CD4-positive, alpha-beta T cell (primary cell): ENCODE measurements at regions of chr7 and their contacts with region 1.

Region 1: GRCh38 chr7:5704534-5704922 is 76.9 kb downstream of the RNF216 start:
- DNase-seq: peak; percentile 60 to 89 (median 72)
- ATAC-seq: no peak
- H3K4me3 ChIP-seq: no peak overlapping the region
- H3K4me3 Mint-ChIP-seq: no peak overlapping the region
- H3K27ac ChIP-seq: no peak overlapping the region
- H3K27ac Mint-ChIP-seq: peak overlapping the region; percentile 24
- H3K4me1 ChIP-seq: peaks cover 31% of the 10 kb centered on the region
- H3K4me1 Mint-ChIP-seq: peaks cover 42% of the 10 kb centered on the region
- H3K27me3 ChIP-seq: no peaks in the 10 kb centered on the region
- H3K27me3 Mint-ChIP-seq: no peaks in the 10 kb centered on the region
- CTCF ChIP-seq: peak; percentile 88

Region 2: GRCh38 chr7:4434306-4434705 is 1270.2 kb before region 1 on chr7:
- CTCF ChIA-PET with region 1: no interaction called
- POLR2A ChIA-PET with region 1: no interaction called
- intact Hi-C with region 1: no loop called
- DNase-seq: no peak
- ATAC-seq: no peak
- H3K4me3 ChIP-seq: no peak overlapping the region
- H3K4me3 Mint-ChIP-seq: no peak overlapping the region
- H3K27ac ChIP-seq: no peak overlapping the region
- H3K27ac Mint-ChIP-seq: no peak overlapping the region
- H3K4me1 ChIP-seq: no peaks in the 10 kb centered on the region
- H3K4me1 Mint-ChIP-seq: no peaks in the 10 kb centered on the region
- H3K27me3 ChIP-seq: no peaks in the 10 kb centered on the region
- H3K27me3 Mint-ChIP-seq: peaks cover 38% of the 10 kb centered on the region
- CTCF ChIP-seq: no peak

Region 3: GRCh38 chr7:4809091-4809591 is 895.4 kb before region 1 on chr7:
- CTCF ChIA-PET with region 1: no interaction called
- POLR2A ChIA-PET with region 1: no interaction called
- intact Hi-C with region 1: no loop called
- DNase-seq: peak in 6 of 14 experiments; percentile 20 to 68 (median 36)
- ATAC-seq: peak; percentile 55
- H3K4me3 ChIP-seq: peak overlapping the region; percentile 41
- H3K4me3 Mint-ChIP-seq: peak overlapping the region; percentile 70
- H3K27ac ChIP-seq: no peak overlapping the region
- H3K27ac Mint-ChIP-seq: no peak overlapping the region
- H3K4me1 ChIP-seq: peaks cover 19% of the 10 kb centered on the region
- H3K4me1 Mint-ChIP-seq: peaks cover 4% of the 10 kb centered on the region
- H3K27me3 ChIP-seq: peaks cover 16 to 27% of the 10 kb centered on the region in 2 experiments
- H3K27me3 Mint-ChIP-seq: peaks cover 31% of the 10 kb centered on the region
- CTCF ChIP-seq: no peak

Region 4: DNA sequence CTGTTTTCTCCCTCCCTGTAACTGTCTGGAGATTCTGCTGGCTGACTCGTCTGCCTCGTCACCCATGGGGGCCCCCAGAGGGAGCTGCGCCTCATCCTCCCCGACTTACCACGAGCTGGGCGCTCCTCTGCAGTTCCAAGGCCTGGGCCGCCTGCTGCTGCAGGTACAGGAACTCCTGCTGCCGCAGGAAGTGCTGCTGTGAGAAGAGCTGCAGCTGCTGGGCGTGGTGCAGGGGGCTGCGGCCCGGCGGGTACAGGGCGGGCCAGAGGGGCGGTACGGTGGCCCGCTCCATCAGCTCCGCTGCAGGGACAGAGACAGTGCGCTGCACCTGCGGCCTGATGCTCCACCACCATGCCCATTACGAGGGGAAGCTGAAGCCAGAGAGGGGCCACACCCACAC is 328.6 kb before region 1 on chr7:
- CTCF ChIA-PET with region 1: no interaction called
- POLR2A ChIA-PET with region 1: no interaction called
- intact Hi-C with region 1: no loop called
- DNase-seq: peak in 9 of 14 experiments; percentile 3 to 53 (median 32)
- ATAC-seq: peak; percentile 82
- H3K4me3 ChIP-seq: no peak overlapping the region
- H3K4me3 Mint-ChIP-seq: no peak overlapping the region
- H3K27ac ChIP-seq: no peak overlapping the region
- H3K27ac Mint-ChIP-seq: no peak overlapping the region
- H3K4me1 ChIP-seq: peaks cover 18% of the 10 kb centered on the region
- H3K4me1 Mint-ChIP-seq: peaks cover 5% of the 10 kb centered on the region
- H3K27me3 ChIP-seq: no peaks in the 10 kb centered on the region
- H3K27me3 Mint-ChIP-seq: no peaks in the 10 kb centered on the region
- CTCF ChIP-seq: no peak

Region 5: DNA sequence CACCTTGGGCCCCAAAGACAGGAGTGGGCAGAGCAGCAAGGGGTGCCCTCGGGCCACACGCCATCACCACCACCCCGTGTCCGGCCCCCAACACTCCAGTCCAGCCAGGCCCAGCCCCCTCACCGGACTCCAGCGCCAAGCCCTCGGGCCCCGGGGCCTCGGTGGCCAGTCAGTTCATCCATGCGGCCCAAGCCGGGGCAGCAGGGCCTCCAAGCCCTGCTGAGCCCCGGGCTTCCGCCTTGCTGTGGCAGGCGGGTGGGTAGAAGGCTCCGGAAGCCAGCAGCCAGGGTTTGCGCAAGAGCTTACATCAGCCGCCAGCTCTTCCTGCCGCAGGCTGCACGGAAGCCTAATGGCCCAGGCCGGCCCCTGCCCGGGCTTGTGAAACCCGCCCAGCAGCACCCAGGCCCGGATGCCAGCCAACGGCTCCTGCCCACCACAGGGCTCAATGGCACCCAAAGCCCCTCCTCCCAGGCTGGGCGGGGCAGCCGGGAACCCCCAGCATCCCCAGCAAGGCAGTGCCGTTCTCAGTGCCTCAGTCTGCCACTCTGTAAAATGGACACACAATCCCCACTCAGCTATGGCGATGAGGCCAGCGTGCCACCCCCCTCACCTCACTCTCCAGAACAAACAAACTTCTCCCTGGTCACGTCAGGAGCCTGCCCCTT is 307.4 kb before region 1 on chr7:
- CTCF ChIA-PET with region 1: interaction called, 6 read pairs
- POLR2A ChIA-PET with region 1: interaction called, 3 read pairs
- intact Hi-C with region 1: loop called (anchors 10 kb)
- DNase-seq: peak; percentile 77 to 99 (median 87)
- ATAC-seq: peak; percentile 89
- H3K4me3 ChIP-seq: peak overlapping the region; percentile 93
- H3K4me3 Mint-ChIP-seq: peak overlapping the region; percentile 91
- H3K27ac ChIP-seq: peak overlapping the region; percentile 77 to 91
- H3K27ac Mint-ChIP-seq: peak overlapping the region; percentile 91
- H3K4me1 ChIP-seq: peaks cover 48% of the 10 kb centered on the region
- H3K4me1 Mint-ChIP-seq: peaks cover 25% of the 10 kb centered on the region
- H3K27me3 ChIP-seq: no peaks in the 10 kb centered on the region
- H3K27me3 Mint-ChIP-seq: no peaks in the 10 kb centered on the region
- CTCF ChIP-seq: no peak

Region 6: DNA sequence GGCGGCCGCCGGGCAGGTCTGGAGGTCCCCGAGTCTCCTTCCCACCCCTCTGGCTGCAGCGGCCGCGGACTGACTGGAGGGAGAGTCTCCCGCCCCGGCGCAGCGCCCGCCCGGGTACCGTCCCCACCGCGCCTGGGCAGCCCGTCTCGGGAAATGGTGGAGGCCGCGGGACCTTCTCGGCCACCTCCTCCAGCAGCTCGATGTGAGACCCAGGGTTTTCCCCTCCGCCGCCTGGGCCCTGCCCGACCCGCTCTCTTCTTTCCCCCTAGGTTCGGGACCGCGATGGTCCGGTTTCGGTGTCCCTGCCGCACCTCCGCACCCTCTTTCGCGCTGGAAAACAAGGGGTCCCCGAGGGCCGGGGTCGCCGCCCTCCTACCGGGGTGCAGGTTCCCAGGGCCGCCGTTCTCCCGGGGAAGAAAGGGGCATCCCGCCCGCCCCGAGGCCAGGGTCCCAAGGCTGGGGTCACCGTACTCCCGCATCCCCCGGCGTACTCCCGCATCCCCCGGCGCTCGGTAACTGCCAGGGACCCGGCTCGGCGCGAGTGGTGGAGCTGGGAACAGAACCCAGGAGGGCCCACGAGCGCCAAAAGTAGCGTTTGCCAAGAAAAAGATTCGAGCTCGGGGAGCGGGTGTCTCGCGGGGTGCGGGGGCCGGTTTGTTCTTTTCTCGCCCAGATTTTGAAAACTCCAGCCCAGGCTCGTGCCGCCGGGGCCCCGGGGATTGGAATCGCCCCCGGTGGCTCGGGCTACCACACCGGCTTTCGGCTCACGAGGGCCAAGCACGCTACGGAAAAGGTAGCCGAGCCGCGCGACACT is 284.3 kb before region 1 on chr7:
- CTCF ChIA-PET with region 1: no interaction called
- POLR2A ChIA-PET with region 1: no interaction called
- intact Hi-C with region 1: no loop called
- DNase-seq: peak in 3 of 14 experiments; percentile 27 to 51 (median 50)
- ATAC-seq: no peak
- H3K4me3 ChIP-seq: peak overlapping the region; percentile 35
- H3K4me3 Mint-ChIP-seq: peak overlapping the region; percentile 74
- H3K27ac ChIP-seq: no peak overlapping the region
- H3K27ac Mint-ChIP-seq: no peak overlapping the region
- H3K4me1 ChIP-seq: peaks cover 70% of the 10 kb centered on the region
- H3K4me1 Mint-ChIP-seq: peaks cover 48% of the 10 kb centered on the region
- H3K27me3 ChIP-seq: peaks cover 73 to 77% of the 10 kb centered on the region in 2 experiments
- H3K27me3 Mint-ChIP-seq: peaks cover 68% of the 10 kb centered on the region
- CTCF ChIP-seq: no peak

Region 7: DNA sequence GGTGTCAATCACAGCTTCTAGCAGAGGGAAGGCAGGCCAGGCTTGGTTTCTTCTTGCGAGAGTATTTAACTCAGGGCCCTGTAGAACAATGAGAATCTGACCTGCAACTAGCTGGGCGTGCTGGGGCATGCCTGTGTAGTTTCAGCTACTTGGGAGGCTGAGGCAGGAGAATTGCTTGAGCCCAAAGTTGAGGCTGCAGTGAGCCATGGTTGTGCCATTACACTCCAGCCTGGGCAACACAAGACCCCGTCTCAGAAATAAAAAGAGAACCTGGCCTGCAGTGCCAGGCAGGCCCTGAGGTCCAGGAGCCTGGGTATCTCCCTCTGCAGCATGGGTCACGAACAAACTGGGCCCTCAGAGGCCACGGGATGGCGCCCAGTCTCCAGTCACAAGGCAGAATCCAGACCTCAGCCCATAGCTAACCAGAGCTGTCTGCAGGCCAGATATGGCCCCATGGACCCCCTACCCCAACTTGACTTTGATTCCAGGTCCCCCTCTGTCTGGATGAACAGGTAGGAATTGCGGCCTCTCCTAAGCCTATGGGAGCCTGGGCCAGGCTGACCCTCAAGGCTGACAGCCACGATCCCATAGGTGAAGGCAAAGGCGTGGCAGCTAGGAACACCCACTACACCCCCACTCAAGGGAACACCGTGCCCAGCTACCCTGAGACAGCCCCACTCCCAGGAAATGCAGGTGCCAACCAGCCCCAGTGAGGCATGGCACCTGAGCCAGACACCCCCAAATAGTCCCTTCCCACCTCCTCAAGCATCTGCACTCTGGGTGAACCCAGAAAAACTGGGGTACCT is 178.2 kb before region 1 on chr7:
- CTCF ChIA-PET with region 1: no interaction called
- POLR2A ChIA-PET with region 1: interaction called, 14 read pairs
- intact Hi-C with region 1: no loop called
- DNase-seq: peak in 10 of 14 experiments; percentile 10 to 56 (median 26)
- ATAC-seq: no peak
- H3K4me3 ChIP-seq: peak overlapping the region; percentile 72
- H3K4me3 Mint-ChIP-seq: peak overlapping the region; percentile 97
- H3K27ac ChIP-seq: peak overlapping the region; percentile 27 to 48
- H3K27ac Mint-ChIP-seq: peak overlapping the region; percentile 95
- H3K4me1 ChIP-seq: peaks cover 37% of the 10 kb centered on the region
- H3K4me1 Mint-ChIP-seq: peaks cover 41% of the 10 kb centered on the region
- H3K27me3 ChIP-seq: no peaks in the 10 kb centered on the region
- H3K27me3 Mint-ChIP-seq: peaks cover 4% of the 10 kb centered on the region
- CTCF ChIP-seq: no peak

Region 8: DNA sequence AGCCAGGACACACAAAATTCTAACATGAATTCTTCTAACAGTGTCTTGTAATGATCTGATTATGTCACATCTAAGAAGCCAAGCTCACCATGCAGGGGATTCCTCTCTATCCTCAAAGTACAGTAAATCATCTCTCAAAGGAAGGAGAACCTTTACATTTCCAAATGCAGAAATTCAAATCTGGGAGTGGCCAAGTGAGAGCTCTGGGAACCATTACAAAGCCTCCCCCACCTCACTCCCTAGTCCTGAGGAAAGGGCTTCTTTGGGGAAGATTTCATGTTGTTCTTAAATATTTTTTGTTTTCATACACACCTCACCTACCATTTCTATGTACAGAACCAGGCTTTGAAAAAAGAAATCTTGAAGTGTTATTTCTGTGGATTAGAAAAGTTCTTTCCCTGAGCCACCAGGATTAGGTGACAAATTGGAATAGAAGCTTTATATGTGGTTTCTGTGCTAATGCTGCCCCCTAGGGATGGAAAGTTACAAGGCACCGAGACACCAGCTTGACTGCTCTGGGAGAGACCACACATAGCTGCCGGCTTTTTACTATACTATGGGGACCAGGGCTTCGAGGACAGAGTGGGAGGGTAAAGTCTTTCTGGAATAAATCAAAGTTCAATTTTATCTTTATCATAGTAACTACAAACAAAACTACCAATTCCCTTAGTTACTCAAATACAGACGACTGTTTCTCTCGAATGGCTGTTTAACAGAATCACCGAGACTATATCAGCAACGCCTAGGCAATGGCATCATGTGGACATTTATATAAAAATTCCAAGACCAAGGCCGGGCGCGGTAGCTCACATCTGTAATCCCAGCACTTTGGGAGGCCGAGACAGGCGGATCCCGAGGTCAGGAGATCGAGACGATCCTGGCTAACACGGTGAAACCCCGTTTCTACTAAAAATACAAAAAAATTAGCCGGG is 39.2 kb before region 1 on chr7:
- CTCF ChIA-PET with region 1: interaction called, 17 read pairs
- POLR2A ChIA-PET with region 1: no interaction called
- intact Hi-C with region 1: loop called (anchors 1 kb)
- DNase-seq: peak; percentile 38 to 86 (median 50)
- ATAC-seq: peak; percentile 80
- H3K4me3 ChIP-seq: no peak overlapping the region
- H3K4me3 Mint-ChIP-seq: no peak overlapping the region
- H3K27ac ChIP-seq: no peak overlapping the region
- H3K27ac Mint-ChIP-seq: no peak overlapping the region
- H3K4me1 ChIP-seq: peaks cover 15% of the 10 kb centered on the region
- H3K4me1 Mint-ChIP-seq: peaks cover 21% of the 10 kb centered on the region
- H3K27me3 ChIP-seq: no peaks in the 10 kb centered on the region
- H3K27me3 Mint-ChIP-seq: no peaks in the 10 kb centered on the region
- CTCF ChIP-seq: peak; percentile 82

Region 9: GRCh38 chr7:5689118-5689517 is 15.4 kb before region 1 on chr7:
- CTCF ChIA-PET with region 1: interaction called, 10 read pairs
- POLR2A ChIA-PET with region 1: interaction called, 13 read pairs
- intact Hi-C with region 1: loop called in 1 of 2 experiments (anchors 1 kb)
- DNase-seq: peak; percentile 33 to 84 (median 58)
- ATAC-seq: peak; percentile 61
- H3K4me3 ChIP-seq: peak overlapping the region; percentile 21
- H3K4me3 Mint-ChIP-seq: peak overlapping the region; percentile 75
- H3K27ac ChIP-seq: peak overlapping the region; percentile 69 to 83
- H3K27ac Mint-ChIP-seq: peak overlapping the region; percentile 90
- H3K4me1 ChIP-seq: peaks cover 85% of the 10 kb centered on the region
- H3K4me1 Mint-ChIP-seq: peaks cover 89% of the 10 kb centered on the region
- H3K27me3 ChIP-seq: no peaks in the 10 kb centered on the region
- H3K27me3 Mint-ChIP-seq: no peaks in the 10 kb centered on the region
- CTCF ChIP-seq: no peak